ENCODE measurements at regions of chr16 and their contacts with region 1.

Region 1: DNA sequence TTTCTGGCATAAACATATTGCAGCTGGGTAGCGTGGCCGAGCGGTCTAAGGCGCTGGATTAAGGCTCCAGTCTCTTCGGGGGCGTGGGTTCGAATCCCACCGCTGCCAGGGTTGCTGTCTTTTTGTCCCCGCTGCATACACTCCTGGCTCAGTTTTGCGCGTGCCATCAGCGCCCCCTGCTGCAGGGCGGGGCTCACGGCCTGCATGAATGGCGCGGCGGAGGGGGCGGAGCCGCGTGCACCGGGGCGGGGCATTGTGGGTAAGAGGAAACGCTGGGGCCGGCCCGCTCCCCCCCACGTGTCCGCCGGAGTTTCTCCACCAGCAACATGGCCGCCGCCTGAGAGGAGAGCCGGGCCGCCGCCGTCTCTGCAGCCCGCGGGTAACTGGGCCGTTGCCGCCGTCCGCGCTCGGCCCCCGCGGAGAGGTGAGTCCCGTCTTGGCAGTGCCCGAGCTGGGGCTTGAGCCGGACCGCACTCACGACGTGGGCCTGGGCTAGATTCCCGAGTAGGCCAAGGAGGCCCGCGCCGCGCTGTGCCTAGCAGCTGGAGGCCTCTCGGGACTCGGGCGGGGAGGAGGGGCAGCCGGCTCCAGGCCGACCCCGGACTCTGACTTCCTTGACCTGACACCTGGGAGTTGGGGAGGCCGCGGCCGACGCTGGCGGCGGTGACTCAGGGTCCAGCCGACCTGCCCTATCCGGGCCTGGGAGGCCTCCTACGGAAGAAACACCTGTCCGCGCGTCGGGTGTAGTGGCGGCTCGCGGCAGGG is at the start of gene POLR3E:
- DNase-seq: peak; percentile 99 to 100 (median 100)
- ATAC-seq: peak; percentile 77
- H3K4me3 ChIP-seq: peak within 1 kb of the TSS; percentile 66
- H3K4me3 Mint-ChIP-seq: peak within 1 kb of the TSS; percentile 96
- H3K27ac ChIP-seq: peak within 1 kb of the TSS; percentile 97 to 99
- H3K27ac Mint-ChIP-seq: peak within 1 kb of the TSS; percentile 99
- H3K4me1 ChIP-seq: peaks cover 45% of the 10 kb centered on the region
- H3K4me1 Mint-ChIP-seq: peaks cover 54% of the 10 kb centered on the region
- H3K27me3 ChIP-seq: no peaks in the 10 kb centered on the region
- H3K27me3 Mint-ChIP-seq: peaks cover 15% of the 10 kb centered on the region
- CTCF ChIP-seq: peak; percentile 91
- total RNA-seq, gene POLR3E: 239 to 242 TPM

Region 2: GRCh38 chr16:20741554-20742285 is 1555.6 kb before region 1 on chr16 and contains the start of gene THUMPD1:
- CTCF ChIA-PET with region 1: no interaction called
- POLR2A ChIA-PET with region 1: no interaction called
- intact Hi-C with region 1: loop called in 1 of 2 experiments (anchors 10 kb)
- DNase-seq: peak; percentile 94 to 99 (median 98)
- ATAC-seq: peak; percentile 92
- H3K4me3 ChIP-seq: peak within 1 kb of the TSS; percentile 100
- H3K4me3 Mint-ChIP-seq: peak within 1 kb of the TSS; percentile 97
- H3K27ac ChIP-seq: peak within 1 kb of the TSS; percentile 99 to 100
- H3K27ac Mint-ChIP-seq: peak within 1 kb of the TSS; percentile 99
- H3K4me1 ChIP-seq: peaks cover 35% of the 10 kb centered on the region
- H3K4me1 Mint-ChIP-seq: peaks cover 34% of the 10 kb centered on the region
- H3K27me3 ChIP-seq: no peaks in the 10 kb centered on the region
- H3K27me3 Mint-ChIP-seq: no peaks in the 10 kb centered on the region
- CTCF ChIP-seq: no peak
- total RNA-seq, gene THUMPD1: 105 to 107 TPM

Region 3: DNA sequence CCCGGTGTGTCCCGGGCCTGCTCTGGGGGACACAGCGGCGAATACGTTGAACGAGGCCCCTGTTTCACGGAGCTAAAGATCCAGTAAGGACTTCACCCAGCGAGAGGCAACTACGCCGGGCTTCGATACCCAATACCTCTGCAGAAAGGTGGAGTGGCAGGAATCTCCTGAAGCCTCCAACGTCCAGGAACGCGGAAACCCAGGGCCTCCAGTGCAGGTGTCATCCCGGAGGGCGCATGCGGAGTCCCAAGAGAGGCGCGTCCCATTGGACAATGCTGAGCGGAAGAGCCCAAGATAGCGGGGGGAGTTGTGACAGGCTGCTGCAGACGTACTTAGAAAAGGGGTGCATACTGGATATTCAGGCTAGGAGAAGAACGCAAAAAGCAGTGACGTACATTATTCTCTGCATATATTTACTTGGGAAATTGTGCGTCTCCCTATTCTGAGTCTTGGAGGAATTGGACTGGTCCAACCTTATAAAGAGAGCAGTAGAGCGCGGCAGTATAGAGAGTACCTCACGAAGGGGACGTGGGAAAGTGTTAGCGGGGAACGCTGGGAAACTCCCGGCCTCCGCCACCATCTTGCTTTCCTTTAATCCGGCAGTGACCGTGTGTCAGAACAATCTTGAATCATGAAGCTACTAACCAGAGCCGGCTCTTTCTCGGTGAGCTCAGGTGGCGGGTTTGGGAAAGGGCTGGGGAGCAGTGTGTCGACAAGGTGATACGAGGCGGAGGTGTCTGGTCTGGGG is 344.3 kb before region 1 on chr16 and contains the start of gene UQCRC2:
- CTCF ChIA-PET with region 1: interaction called, 3 read pairs
- POLR2A ChIA-PET with region 1: no interaction called
- intact Hi-C with region 1: loop called (anchors 1 kb)
- DNase-seq: peak; percentile 76 to 95 (median 82)
- ATAC-seq: peak; percentile 87
- H3K4me3 ChIP-seq: peak within 1 kb of the TSS; percentile 92
- H3K4me3 Mint-ChIP-seq: peak within 1 kb of the TSS; percentile 94
- H3K27ac ChIP-seq: peak within 1 kb of the TSS; percentile 93 to 96
- H3K27ac Mint-ChIP-seq: peak within 1 kb of the TSS; percentile 94
- H3K4me1 ChIP-seq: peaks cover 52% of the 10 kb centered on the region
- H3K4me1 Mint-ChIP-seq: peaks cover 62% of the 10 kb centered on the region
- H3K27me3 ChIP-seq: no peaks in the 10 kb centered on the region
- H3K27me3 Mint-ChIP-seq: no peaks in the 10 kb centered on the region
- CTCF ChIP-seq: no peak
- total RNA-seq, gene UQCRC2: 142 to 146 TPM

Region 4: DNA sequence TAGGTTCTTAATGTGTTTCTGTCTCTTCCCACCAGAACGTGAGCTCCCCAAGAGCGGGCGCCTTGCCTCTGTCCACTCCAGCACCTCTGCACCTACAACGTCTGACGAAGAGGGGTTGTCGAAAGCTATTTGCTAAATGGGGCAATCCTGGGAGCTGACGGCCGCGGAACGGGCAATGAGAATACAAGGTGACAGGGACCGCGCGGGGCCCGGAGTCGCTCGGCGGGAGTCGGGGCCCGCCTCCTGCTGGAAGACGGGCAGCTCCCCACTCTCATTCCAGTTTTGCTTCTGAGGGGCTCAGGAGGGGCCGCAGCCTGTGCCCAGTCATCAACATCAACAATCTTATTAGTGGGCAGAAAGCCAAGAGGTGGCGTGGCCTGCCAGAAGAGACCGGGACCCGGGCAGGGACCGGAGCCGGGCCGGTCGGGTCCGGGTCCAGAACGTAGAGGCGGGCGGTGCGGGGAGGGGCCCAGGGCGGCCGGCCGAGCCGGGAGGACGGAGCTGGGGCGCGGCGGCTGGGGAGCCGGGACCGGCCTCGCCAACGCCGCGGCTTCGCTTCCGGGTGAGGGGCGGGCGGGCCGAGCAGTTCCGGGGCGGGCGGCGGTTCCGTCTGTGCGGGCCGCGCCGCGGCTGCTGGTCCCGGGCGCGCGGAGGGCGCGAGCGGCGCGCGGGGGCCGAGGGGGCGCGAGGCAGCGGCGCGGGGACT is 289.6 kb before region 1 on chr16 and contains the start of gene MOSMO:
- CTCF ChIA-PET with region 1: interaction called, 5 read pairs
- POLR2A ChIA-PET with region 1: interaction called, 20 read pairs
- intact Hi-C with region 1: no loop called
- DNase-seq: peak; percentile 37 to 85 (median 66)
- ATAC-seq: peak; percentile 83
- H3K4me3 ChIP-seq: peak within 1 kb of the TSS; percentile 89
- H3K4me3 Mint-ChIP-seq: peak within 1 kb of the TSS; percentile 90
- H3K27ac ChIP-seq: peak within 1 kb of the TSS; percentile 37 to 47
- H3K27ac Mint-ChIP-seq: peak within 1 kb of the TSS; percentile 79
- H3K4me1 ChIP-seq: peaks cover 28% of the 10 kb centered on the region
- H3K4me1 Mint-ChIP-seq: peaks cover 51% of the 10 kb centered on the region
- H3K27me3 ChIP-seq: no peaks in the 10 kb centered on the region
- H3K27me3 Mint-ChIP-seq: no peaks in the 10 kb centered on the region
- CTCF ChIP-seq: no peak
- total RNA-seq, gene MOSMO: 2.3 to 2.8 TPM

Region 5: GRCh38 chr16:22206013-22206841 is 91.1 kb before region 1 on chr16 and contains the start of gene EEF2K:
- CTCF ChIA-PET with region 1: interaction called, 9 read pairs
- POLR2A ChIA-PET with region 1: interaction called, 44 read pairs
- intact Hi-C with region 1: loop called in 1 of 2 experiments (anchors 1 kb)
- DNase-seq: peak; percentile 60 to 92 (median 76)
- ATAC-seq: peak; percentile 91
- H3K4me3 ChIP-seq: peak within 1 kb of the TSS; percentile 85
- H3K4me3 Mint-ChIP-seq: peak within 1 kb of the TSS; percentile 96
- H3K27ac ChIP-seq: peak within 1 kb of the TSS in 1 of 2 donors; percentile 51
- H3K27ac Mint-ChIP-seq: peak within 1 kb of the TSS; percentile 79
- H3K4me1 ChIP-seq: peaks cover 26% of the 10 kb centered on the region
- H3K4me1 Mint-ChIP-seq: peaks cover 36% of the 10 kb centered on the region
- H3K27me3 ChIP-seq: no peaks in the 10 kb centered on the region
- H3K27me3 Mint-ChIP-seq: no peaks in the 10 kb centered on the region
- CTCF ChIP-seq: peak; percentile 81
- total RNA-seq, gene EEF2K: 10.1 to 13.2 TPM

Region 6: GRCh38 chr16:22623351-22623781 is 326.1 kb after region 1 on chr16:
- CTCF ChIA-PET with region 1: no interaction called
- POLR2A ChIA-PET with region 1: no interaction called
- intact Hi-C with region 1: no loop called
- DNase-seq: no peak
- ATAC-seq: no peak
- H3K4me3 ChIP-seq: no peak overlapping the region
- H3K4me3 Mint-ChIP-seq: no peak overlapping the region
- H3K27ac ChIP-seq: no peak overlapping the region
- H3K27ac Mint-ChIP-seq: no peak overlapping the region
- H3K4me1 ChIP-seq: no peaks in the 10 kb centered on the region
- H3K4me1 Mint-ChIP-seq: no peaks in the 10 kb centered on the region
- H3K27me3 ChIP-seq: peaks cover 9 to 12% of the 10 kb centered on the region in 2 experiments
- H3K27me3 Mint-ChIP-seq: peaks cover 14% of the 10 kb centered on the region
- CTCF ChIP-seq: no peak

Region 7: DNA sequence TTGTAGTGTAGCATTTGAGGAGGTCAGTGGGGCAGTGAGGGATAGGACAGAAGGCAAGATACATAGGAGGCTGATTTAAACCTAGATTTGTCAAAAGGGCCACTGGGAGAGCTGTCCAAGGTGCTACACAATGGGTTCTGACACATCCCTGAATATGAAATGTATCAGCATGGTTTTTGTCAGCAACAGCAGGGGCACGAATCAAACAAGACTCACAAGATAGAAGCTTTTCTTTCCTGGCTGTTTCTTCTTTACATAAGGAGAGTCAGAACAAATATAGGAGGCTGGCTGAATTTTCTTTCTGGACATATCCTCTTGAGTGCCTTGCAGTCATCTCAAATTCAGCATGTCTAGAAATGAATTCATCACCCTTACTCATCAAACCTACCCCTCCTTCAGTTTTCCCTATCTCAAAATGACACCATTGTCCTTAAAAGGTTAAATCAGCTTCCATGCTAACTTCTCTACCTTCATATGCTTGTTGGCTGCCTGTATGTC is 343.9 kb after region 1 on chr16:
- CTCF ChIA-PET with region 1: no interaction called
- POLR2A ChIA-PET with region 1: no interaction called
- intact Hi-C with region 1: no loop called
- DNase-seq: no peak
- ATAC-seq: no peak
- H3K4me3 ChIP-seq: no peak overlapping the region
- H3K4me3 Mint-ChIP-seq: no peak overlapping the region
- H3K27ac ChIP-seq: no peak overlapping the region
- H3K27ac Mint-ChIP-seq: no peak overlapping the region
- H3K4me1 ChIP-seq: no peaks in the 10 kb centered on the region
- H3K4me1 Mint-ChIP-seq: no peaks in the 10 kb centered on the region
- H3K27me3 ChIP-seq: peaks cover 25 to 39% of the 10 kb centered on the region in 2 experiments
- H3K27me3 Mint-ChIP-seq: no peaks in the 10 kb centered on the region
- CTCF ChIP-seq: no peak

Region 8: GRCh38 chr16:23072084-23072599 is 774.8 kb after region 1 on chr16:
- CTCF ChIA-PET with region 1: no interaction called
- POLR2A ChIA-PET with region 1: no interaction called
- intact Hi-C with region 1: no loop called
- DNase-seq: no peak
- ATAC-seq: no peak
- H3K4me3 ChIP-seq: no peak overlapping the region
- H3K4me3 Mint-ChIP-seq: no peak overlapping the region
- H3K27ac ChIP-seq: no peak overlapping the region
- H3K27ac Mint-ChIP-seq: no peak overlapping the region
- H3K4me1 ChIP-seq: no peaks in the 10 kb centered on the region
- H3K4me1 Mint-ChIP-seq: no peaks in the 10 kb centered on the region
- H3K27me3 ChIP-seq: no peaks in the 10 kb centered on the region
- H3K27me3 Mint-ChIP-seq: no peaks in the 10 kb centered on the region
- CTCF ChIP-seq: no peak